Caco-2 (cell line): ENCODE measurements at regions of chr9 and their contacts with region 1.

Region 1: DNA sequence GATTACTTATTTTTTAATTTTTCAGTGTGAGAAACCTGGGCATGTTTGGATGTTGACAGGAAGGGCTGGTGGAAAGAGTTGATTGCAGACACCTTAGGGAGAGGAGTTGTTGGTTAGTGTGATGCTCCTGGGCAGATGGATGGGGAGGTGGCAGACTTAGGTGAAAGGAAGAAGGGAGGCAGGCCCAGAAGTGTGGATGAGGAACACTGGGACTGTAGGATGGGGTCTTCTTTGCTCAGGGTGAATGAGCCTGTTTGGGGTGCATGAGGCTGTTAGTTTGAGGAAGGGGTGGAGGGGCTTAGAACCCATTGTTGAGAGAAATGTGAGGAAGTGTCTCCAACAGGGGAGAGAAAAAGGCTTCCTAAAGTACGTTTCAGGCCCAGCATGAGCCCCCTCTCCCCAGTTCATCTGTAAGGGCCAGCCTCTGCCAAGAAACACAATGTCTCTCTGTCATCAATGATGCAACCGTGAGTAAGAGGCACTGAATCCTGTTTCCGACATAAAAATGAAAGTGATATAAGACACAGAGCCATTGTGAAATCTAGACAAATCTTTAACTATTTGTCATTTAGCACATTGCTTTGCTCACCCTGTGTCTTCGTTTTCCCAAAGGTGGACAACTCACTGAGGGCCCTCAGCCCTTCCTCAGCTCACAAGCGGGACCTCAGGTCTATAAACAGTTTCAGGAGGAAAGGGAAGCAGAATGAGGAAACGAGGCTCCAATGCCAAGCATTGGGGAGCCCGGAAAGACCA is 58.7 kb upstream of the KLF4 start:
- DNase-seq: peak in 1 of 2 experiments; percentile 35
- H3K4me3 ChIP-seq: no peak overlapping the region
- H3K4me3 Mint-ChIP-seq: no peak overlapping the region
- H3K27ac Mint-ChIP-seq: peak overlapping the region; percentile 56
- H3K4me1 ChIP-seq: peaks cover 21% of the 10 kb centered on the region
- H3K4me1 Mint-ChIP-seq: peaks cover 33% of the 10 kb centered on the region
- H3K27me3 ChIP-seq: no peaks in the 10 kb centered on the region
- H3K27me3 Mint-ChIP-seq: no peaks in the 10 kb centered on the region
- CTCF ChIP-seq: no peak

Region 2: DNA sequence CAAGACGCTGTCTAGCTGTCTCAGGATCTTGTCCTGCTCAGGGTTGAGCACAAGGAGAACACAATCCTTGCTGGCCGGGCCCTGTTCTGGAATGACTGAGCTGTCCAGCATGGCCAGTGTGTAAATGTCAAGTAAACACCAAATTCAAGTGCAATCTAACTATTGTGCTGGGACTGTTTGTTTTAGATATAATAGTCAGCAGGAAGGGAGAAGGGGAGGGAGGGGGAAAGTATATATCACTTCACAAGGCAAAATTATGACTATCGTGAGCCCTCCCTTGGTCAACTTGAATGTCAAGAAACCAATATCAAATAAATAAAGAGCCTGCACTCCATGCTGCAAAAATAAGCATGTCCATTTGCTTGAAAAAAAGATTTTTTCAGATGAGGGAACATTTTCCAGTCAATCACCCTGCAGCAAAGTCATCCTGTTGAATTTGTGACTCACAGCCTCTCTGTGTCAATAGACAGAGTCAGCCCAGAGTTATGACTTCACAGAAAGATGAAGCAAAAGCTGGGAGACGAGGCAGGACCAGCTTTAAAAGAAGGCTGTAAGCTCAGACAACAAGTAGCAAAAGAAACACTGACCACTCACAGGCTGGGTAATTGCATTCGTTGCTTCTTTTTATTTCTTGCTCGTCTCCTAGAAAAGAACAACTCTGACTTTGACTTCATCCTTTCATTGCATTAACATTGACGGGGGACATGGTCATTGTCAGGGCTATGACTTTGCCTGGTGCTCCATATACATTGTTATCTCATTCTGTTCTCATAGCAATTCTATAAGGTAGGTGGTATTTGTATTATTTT is 43.5 kb before region 1 on chr9:
- CTCF ChIA-PET with region 1: no interaction called
- POLR2A ChIA-PET with region 1: no interaction called
- intact Hi-C with region 1: loop called (anchors 5 kb)
- DNase-seq: peak; percentile 56 to 61
- H3K4me3 ChIP-seq: no peak overlapping the region
- H3K4me3 Mint-ChIP-seq: no peak overlapping the region
- H3K27ac Mint-ChIP-seq: no peak overlapping the region
- H3K4me1 ChIP-seq: peaks cover 9% of the 10 kb centered on the region
- H3K4me1 Mint-ChIP-seq: peaks cover 8% of the 10 kb centered on the region
- H3K27me3 ChIP-seq: no peaks in the 10 kb centered on the region
- H3K27me3 Mint-ChIP-seq: no peaks in the 10 kb centered on the region
- CTCF ChIP-seq: no peak

Region 3: DNA sequence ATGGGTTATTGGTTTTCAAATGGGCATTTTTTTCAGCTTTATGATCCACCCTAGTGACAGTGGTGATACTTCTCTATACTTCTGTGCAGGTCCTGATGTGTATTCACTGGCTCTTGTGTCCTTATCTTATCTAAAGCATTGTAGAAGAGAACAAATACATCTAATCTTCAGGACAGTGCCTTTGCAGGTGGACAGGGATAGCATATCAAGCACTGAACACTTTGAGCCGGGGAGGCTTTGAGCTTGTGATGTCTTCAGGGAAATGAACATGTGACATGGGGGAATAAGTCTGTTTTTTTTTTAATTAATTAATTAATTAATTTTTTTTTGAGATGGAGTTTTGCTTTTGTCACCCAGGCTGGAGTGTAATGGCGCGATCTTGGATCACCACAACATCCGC is 56.8 kb after region 1 on chr9:
- CTCF ChIA-PET with region 1: no interaction called
- POLR2A ChIA-PET with region 1: no interaction called
- intact Hi-C with region 1: loop called (anchors 1 kb)
- DNase-seq: peak; percentile 62 to 77
- H3K4me3 ChIP-seq: no peak overlapping the region
- H3K4me3 Mint-ChIP-seq: peak overlapping the region; percentile 20
- H3K27ac Mint-ChIP-seq: no peak overlapping the region
- H3K4me1 ChIP-seq: peaks cover 8% of the 10 kb centered on the region
- H3K4me1 Mint-ChIP-seq: peaks cover 8% of the 10 kb centered on the region
- H3K27me3 ChIP-seq: no peaks in the 10 kb centered on the region
- H3K27me3 Mint-ChIP-seq: peaks cover 3% of the 10 kb centered on the region
- CTCF ChIP-seq: no peak